PC-3 (cell line): ENCODE measurements at regions of chr5 and their contacts with region 1.

Region 1: DNA sequence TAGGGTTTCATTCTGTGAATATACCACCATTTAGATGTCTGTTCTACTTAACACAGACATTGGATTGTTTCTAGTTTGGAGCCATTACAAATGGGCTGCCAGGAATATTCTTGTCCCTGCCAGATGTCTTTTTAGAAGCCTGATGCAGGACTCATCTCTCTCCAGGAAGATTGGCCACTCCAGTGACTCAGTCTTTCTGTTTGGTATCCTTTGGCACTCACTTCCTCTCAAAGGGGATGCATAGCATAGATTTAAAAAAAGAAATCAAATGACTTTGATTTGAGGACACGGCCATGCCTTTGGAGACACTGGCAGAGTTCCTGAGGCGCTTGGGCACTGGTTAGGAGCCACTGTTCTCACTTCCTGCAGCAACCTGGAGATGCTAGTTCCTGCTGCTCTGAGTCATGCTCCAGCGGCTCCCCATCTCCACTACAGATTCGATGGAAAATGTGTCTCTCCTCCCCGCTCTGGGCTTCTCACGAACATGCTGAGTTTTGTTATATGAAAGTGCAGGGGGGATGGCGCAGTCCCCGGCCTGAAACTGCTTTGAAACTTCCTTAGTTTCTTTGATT is 3.5 kb upstream of the ZNF366 start:
- DNase-seq: peak; percentile 48
- ATAC-seq: peak; percentile 10; the same call in 1 of the 2 replicates
- H3K4me3 ChIP-seq: no peak overlapping the region
- H3K27ac ChIP-seq: peak overlapping the region; percentile 85
- H3K4me1 ChIP-seq: peaks cover 37% of the 10 kb centered on the region
- H3K27me3 ChIP-seq: no peaks in the 10 kb centered on the region
- CTCF ChIP-seq: no peak

Region 2: GRCh38 chr5:72465601-72466563 is 44.8 kb before region 1 on chr5:
- CTCF ChIA-PET with region 1: no interaction called
- POLR2A ChIA-PET with region 1: no interaction called
- intact Hi-C with region 1: loop called (anchors 5 kb)
- DNase-seq: peak; percentile 37
- ATAC-seq: no peak
- H3K4me3 ChIP-seq: no peak overlapping the region
- H3K27ac ChIP-seq: no peak overlapping the region
- H3K4me1 ChIP-seq: peaks cover 44% of the 10 kb centered on the region
- H3K27me3 ChIP-seq: no peaks in the 10 kb centered on the region
- CTCF ChIP-seq: no peak

Region 3: DNA sequence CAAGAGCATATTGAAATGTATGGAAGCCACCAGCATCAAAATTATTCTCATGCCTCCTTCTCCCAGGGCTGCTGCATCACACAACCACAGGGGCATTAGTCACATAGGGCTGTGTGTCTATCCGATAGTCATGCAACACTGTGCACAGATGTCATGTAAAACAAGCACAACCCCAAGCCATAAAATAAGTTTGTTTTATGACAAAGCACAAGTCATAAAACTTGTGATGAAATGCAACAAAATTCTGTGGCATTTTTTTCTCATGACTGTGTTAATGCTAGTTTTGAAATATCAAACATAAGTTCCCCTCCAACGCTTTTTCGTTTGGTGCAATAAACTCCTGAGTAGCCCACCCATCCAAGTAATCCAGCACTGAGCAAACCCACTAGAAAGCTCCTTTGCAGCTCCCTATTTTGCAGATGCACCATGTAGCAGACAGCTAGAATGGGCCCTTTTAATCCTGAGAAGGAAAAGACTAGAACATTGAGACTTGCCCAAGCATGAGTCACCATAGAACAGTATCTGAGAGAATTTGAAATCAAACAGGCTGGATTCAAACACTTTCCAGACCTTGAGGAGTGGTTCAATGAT is 89.8 kb after region 1 on chr5:
- CTCF ChIA-PET with region 1: no interaction called
- POLR2A ChIA-PET with region 1: interaction called, 22 read pairs
- intact Hi-C with region 1: no loop called
- DNase-seq: peak; percentile 96
- ATAC-seq: peak; percentile 89
- H3K4me3 ChIP-seq: peak overlapping the region; percentile 58
- H3K27ac ChIP-seq: peak overlapping the region; percentile 100
- H3K4me1 ChIP-seq: peaks cover 71% of the 10 kb centered on the region
- H3K27me3 ChIP-seq: no peaks in the 10 kb centered on the region
- CTCF ChIP-seq: no peak